Activated naive CD4-positive, alpha-beta T cell treated with anti-CD3 and anti-CD28 coated beads for 36 hours (primary cell): ENCODE measurements at regions of chr17 and their contacts with region 1.

Region 1: DNA sequence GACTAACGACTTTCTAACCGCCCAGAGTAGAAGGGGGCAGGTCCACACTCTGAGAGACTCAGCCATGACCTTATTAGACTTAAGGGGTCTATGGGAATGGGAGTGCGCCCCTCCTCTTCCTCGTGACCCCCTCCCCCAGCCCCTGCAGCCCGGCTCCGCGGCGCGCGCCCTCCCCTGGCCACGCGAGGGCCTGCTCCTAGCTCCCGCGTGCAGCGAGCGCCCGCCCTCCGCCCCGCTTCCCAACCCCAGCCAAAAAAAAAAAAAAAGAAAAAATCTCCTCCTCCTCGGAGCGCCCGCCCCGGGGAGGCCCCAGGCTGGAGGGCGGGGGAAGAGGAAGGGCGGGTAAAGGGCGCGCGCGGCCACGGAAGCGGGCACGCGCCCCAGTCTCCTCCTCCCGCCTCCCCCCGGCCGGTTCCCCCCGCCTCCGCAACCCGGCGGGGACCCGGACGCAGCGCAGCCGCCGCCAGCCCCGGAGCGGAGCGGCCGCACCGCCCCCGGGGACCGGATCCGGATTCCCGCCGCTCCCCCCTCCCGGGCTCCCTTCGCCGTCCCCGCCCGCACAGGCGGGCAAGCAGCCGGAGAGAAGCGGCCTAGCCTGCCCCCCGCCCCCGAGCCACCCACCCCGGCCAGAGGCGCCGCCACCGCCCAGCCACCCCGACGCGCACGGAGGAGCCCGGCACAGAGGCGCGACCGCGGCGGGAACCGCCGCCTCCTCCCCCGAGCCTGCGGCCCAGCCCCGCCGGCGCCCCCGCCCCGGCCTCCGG is 949 bp downstream of the UBTF start:
- DNase-seq: peak; percentile 89
- H3K4me3 Mint-ChIP-seq: peak overlapping the region; percentile 94
- H3K27ac Mint-ChIP-seq: peak overlapping the region; percentile 96
- H3K4me1 Mint-ChIP-seq: peaks cover 40% of the 10 kb centered on the region
- H3K27me3 Mint-ChIP-seq: no peaks in the 10 kb centered on the region

Region 2: GRCh38 chr17:44070455-44071197 is 147.9 kb before region 1 on chr17 and contains the start of gene G6PC3:
- CTCF ChIA-PET with region 1: no interaction called
- intact Hi-C with region 1: loop called (anchors 1 kb)
- DNase-seq: peak; percentile 94
- H3K4me3 Mint-ChIP-seq: peak within 1 kb of the TSS; percentile 98
- H3K27ac Mint-ChIP-seq: peak within 1 kb of the TSS; percentile 96
- H3K4me1 Mint-ChIP-seq: peaks cover 42% of the 10 kb centered on the region
- H3K27me3 Mint-ChIP-seq: no peaks in the 10 kb centered on the region
- total RNA-seq, gene G6PC3: 15.9 to 19.4 TPM

Region 3: GRCh38 chr17:44186307-44187130 is 32.0 kb before region 1 on chr17 and contains the start of gene TMUB2:
- CTCF ChIA-PET with region 1: interaction called, 6 read pairs
- intact Hi-C with region 1: loop called (anchors 1 kb)
- DNase-seq: peak; percentile 100
- H3K4me3 Mint-ChIP-seq: peak within 1 kb of the TSS; percentile 100
- H3K27ac Mint-ChIP-seq: peak within 1 kb of the TSS; percentile 99
- H3K4me1 Mint-ChIP-seq: peaks cover 43% of the 10 kb centered on the region
- H3K27me3 Mint-ChIP-seq: no peaks in the 10 kb centered on the region
- total RNA-seq, gene TMUB2: 21.2 to 22.9 TPM

Region 4: DNA sequence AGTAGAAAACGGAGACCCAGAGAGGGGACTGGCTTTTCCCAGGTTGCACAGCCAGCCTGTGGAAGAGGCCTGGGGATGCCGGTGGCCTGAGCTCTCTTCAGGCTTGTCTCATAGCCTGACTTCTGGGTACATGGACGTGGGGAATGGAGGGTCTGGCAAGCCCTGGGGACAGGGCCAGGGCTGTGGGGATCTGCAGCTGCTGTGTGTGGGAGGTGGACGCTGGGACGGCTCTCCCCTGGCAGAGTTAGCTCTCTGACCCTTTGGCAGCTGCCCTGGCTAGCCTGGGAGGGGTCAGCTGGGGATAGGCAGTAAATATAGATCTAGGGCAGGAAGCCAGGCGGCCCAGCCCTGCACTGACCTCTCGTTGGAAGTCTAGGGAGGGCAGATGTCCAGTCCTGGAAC is 28.9 kb after region 1 on chr17:
- CTCF ChIA-PET with region 1: interaction called, 6 read pairs
- intact Hi-C with region 1: loop called (anchors 2 kb)
- DNase-seq: no peak
- H3K4me3 Mint-ChIP-seq: no peak overlapping the region
- H3K27ac Mint-ChIP-seq: peak overlapping the region; percentile 24
- H3K4me1 Mint-ChIP-seq: peaks cover 38% of the 10 kb centered on the region
- H3K27me3 Mint-ChIP-seq: no peaks in the 10 kb centered on the region

Region 5: DNA sequence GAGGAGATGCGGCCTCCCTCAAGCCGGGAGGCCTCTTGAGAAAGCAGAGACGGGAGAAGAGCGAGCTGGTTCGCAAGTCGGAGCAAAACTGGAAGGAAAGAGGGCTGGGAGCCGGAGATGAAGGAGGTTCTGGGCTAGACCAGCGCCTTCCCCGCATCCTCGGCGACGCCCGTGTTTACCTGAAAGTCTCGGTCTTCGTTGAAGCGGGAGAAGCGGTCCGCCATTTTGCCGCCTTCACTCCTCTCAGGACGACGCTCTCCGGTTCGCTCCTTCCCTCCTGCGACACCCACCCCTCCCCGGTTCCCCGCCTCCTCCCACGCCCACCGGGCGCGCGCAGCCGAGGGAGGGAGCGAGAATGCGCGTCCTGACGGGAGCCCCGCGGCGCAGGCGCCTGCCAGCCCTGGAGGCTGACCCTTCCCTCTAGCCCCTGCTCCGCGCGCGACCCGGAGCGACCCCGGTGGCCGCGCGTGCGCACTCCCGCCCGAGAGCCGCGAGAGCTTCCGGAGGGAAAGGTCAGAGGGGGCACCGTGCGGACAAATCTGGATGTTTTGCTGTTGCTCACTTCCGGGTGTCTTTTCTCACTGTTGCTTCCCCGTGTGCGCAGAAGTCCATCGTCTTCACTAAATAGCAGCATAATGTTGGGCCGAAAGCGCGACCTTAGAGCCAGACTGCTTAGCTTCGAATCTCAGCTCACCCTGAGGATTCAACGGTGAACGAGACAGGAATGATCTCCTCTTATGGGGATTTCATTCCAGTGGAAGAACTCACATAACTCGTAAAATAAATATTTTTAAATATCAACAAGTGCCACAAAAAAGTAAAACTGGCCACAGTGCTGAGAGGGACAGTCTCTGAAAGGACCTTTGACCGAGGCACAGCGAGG is 284.9 kb after region 1 on chr17 and contains the start of gene GPATCH8:
- CTCF ChIA-PET with region 1: no interaction called
- intact Hi-C with region 1: loop called (anchors 5 kb)
- DNase-seq: peak; percentile 95
- H3K4me3 Mint-ChIP-seq: peak within 1 kb of the TSS; percentile 97
- H3K27ac Mint-ChIP-seq: peak within 1 kb of the TSS; percentile 93
- H3K4me1 Mint-ChIP-seq: peaks cover 32% of the 10 kb centered on the region
- H3K27me3 Mint-ChIP-seq: no peaks in the 10 kb centered on the region
- total RNA-seq, gene GPATCH8: 31.5 to 31.7 TPM